ENCODE measurements at regions of chr7 and their contacts with region 1.

Region 1: DNA sequence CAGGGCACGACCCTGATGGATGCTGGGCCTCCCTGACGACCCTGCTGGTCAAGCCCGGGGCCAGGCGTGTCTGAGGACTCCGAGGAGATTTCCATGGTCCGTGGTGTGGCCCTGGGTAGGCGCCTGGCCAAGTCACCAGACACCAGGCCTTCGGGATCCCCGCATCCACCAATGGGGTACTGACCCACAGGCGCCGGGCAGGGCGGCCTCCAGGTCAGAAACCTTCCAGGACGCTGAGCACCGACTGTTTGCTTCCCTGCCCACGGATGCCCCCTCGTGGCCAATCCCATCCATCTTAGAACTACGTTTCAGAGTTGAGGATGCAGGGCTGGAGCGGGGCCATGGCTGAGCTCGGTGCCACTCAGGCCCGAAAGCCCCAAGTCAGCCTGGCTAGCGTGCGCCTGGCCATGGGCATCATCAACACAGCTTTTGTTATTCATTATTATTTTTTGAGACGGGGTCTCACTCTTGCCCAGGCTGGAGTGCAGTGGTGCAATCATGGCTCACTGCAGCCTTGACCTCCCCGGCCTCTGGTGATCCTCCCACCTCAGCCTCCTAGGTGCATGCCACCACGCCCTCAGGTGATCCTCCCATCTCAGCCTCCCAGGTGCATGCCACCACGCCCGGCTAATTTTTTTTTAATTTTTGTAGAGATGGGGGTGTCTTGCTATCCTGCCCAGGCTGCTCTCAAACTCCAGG is 7.1 kb upstream of the AMZ1 start:
- DNase-seq: peak; percentile 27
- ATAC-seq: peak; percentile 89
- H3K4me3 ChIP-seq: no peak overlapping the region
- H3K27ac ChIP-seq: no peak overlapping the region
- H3K4me1 ChIP-seq: no peaks in the 10 kb centered on the region; the same call in 1 of the 2 replicates
- H3K27me3 ChIP-seq: no peaks in the 10 kb centered on the region
- CTCF ChIP-seq: peak; percentile 96

Region 2: DNA sequence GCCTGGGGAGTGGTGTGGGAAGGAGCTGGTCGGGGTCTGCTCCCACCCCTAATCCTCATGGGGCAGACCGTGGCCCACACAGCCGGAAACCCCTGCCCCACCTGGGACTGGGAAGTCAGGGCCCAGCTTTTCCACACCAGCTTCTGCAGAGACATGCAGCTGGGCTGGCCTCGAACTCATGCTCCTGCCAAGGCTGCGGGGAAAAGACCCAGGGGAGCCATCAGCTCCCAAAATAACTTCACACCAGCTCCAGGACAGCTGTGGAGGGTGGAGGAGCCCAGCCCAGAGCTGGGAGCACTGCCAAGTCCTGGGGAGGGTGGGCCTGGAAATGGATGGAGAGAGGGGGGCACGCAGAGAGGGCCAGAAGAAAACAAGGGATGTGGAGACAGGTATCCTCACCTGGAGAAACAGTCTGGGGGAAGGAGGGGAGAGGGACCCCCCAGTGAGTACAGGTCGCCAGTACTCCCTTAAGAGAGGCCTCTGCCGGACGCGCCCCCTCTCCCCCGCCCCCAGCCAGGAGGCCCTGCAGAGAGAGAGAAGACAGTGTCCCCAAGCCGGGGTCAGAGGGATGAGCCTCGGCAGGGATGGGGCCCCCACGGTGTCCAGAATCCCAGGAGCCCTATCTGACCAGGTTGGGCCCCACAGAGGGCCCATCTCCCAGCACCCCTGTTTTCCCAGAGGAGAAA is 193.2 kb before region 1 on chr7:
- CTCF ChIA-PET with region 1: no interaction called
- POLR2A ChIA-PET with region 1: no interaction called
- in situ Hi-C with region 1: no loop called
- intact Hi-C with region 1: no loop called
- DNase-seq: no peak
- ATAC-seq: 0 out of 2 replicates have a peak, but pooled peaks have one; percentile 4
- H3K4me3 ChIP-seq: no peak overlapping the region
- H3K27ac ChIP-seq: no peak overlapping the region
- H3K4me1 ChIP-seq: peaks cover 8% of the 10 kb centered on the region
- H3K27me3 ChIP-seq: no peaks in the 10 kb centered on the region
- CTCF ChIP-seq: no peak

Region 3: DNA sequence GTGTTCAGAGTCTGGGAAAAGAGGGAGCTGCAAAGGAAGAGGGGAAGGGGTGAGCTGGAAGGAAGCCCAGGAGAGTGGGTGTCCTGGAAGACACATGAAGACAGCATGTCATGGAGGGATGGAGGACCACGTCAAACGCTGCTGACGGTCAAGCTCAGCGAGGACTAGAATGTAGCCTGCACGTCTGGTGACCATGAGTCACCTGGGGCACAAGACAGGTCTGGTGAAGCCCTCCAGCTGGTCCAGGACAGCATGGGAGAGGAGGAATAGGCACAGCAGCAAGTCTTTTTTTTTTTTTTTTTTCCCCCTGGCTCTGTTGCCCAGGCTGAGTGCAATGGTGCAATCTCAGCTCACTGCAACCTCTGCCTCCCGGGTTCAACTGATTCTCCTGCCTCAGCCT is 12.5 kb before region 1 on chr7:
- CTCF ChIA-PET with region 1: interaction called, 10 read pairs
- POLR2A ChIA-PET with region 1: interaction called, 3 read pairs
- in situ Hi-C with region 1: no loop called
- intact Hi-C with region 1: no loop called
- DNase-seq: no peak
- ATAC-seq: no peak
- H3K4me3 ChIP-seq: no peak overlapping the region
- H3K27ac ChIP-seq: no peak overlapping the region
- H3K4me1 ChIP-seq: peaks cover 12% of the 10 kb centered on the region
- H3K27me3 ChIP-seq: no peaks in the 10 kb centered on the region
- CTCF ChIP-seq: no peak

Region 4: DNA sequence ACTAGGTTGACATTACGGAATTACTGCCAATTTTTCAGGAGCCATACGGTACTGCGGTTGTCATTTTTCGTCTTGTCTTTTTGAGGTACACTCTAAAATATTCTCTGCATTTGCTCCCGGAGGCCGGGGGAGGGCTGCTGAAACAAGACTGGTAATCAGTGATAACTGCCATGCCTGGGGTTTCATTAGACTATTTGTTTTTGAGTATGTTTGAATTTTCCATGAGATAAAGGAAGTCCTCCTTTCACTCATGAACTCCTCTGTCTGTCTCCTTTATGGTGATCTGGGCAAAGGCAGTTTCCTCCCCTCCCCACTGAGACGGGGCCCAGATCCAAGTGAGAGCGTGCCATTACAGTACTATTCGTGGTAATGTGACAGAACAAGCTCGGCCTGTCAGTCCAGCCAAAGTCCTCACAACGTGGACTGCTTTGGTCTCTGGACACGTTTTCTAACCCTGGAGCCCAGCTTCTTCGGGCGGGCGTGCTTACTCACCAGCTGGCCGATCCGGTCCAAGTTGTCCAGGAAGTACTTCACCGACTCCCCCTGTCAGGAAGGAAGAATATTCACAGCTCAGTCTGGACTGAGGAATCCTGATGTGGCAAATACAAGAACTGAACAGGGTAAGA is 52.1 kb after region 1 on chr7:
- CTCF ChIA-PET with region 1: no interaction called
- POLR2A ChIA-PET with region 1: no interaction called
- in situ Hi-C with region 1: no loop called
- intact Hi-C with region 1: no loop called
- DNase-seq: no peak
- ATAC-seq: no peak
- H3K4me3 ChIP-seq: no peak overlapping the region
- H3K27ac ChIP-seq: no peak overlapping the region; the same call in 1 of the 2 replicates
- H3K4me1 ChIP-seq: peaks cover 9% of the 10 kb centered on the region; the same call in 1 of the 2 replicates
- H3K27me3 ChIP-seq: no peaks in the 10 kb centered on the region
- CTCF ChIP-seq: no peak